Gastrocnemius medialis (tissue), 4 donors: ENCODE measurements at regions of chr12 and their contacts with region 1.

Region 1: GRCh38 chr12:111405149-111405860 is 418 bp upstream of the SH2B3 start:
- DNase-seq: peak; percentile 83 to 90
- ATAC-seq: peak; percentile 80 to 86
- H3K4me3 ChIP-seq: peak overlapping the region; percentile 64 to 78 (median 68)
- H3K27ac ChIP-seq: peak overlapping the region; percentile 54 to 83 (median 83)
- H3K4me1 ChIP-seq: peaks cover 43 to 51% of the 10 kb centered on the region in 2 donors
- H3K27me3 ChIP-seq: no peaks in the 10 kb centered on the region
- CTCF ChIP-seq: peak; percentile 27 to 70 (median 62)
- POLR2A ChIP-seq: no peak

Region 2: DNA sequence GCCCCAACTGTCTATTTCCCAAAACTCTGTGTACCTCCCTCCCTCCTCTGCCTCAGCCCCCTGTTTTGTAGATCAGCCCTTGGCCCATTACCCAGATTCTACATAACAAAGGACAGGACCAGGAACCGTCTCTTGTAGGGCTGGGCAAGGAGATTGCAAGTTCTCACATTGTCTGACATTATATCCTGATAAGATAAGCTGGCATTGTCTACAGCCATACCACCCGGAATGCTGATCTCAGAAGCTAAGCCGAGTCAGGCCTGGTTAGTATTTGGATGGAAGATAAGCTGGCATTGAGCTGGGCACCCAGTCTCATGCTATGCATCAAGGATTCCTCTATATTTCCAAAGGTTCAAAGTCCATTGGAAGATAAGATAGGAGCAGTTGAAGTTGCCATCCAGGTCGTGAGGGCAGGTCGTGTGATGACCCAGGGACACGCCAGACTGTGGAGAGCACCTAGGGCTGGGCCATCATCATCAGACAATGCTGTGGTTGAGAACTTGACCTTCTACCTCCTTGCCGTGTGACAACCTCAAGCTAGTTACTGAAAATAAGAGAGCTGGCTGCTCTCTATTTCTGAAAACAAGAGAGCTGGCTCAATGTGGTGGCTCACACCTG is 65.9 kb before region 1 on chr12:
- in situ Hi-C with region 1: no loop called
- intact Hi-C with region 1: no loop called
- DNase-seq: no peak
- ATAC-seq: no peak
- H3K4me3 ChIP-seq: no peak overlapping the region
- H3K27ac ChIP-seq: no peak overlapping the region
- H3K4me1 ChIP-seq: no peaks in the 10 kb centered on the region
- H3K27me3 ChIP-seq: no peaks in the 10 kb centered on the region
- CTCF ChIP-seq: no peak
- POLR2A ChIP-seq: no peak

Region 3: DNA sequence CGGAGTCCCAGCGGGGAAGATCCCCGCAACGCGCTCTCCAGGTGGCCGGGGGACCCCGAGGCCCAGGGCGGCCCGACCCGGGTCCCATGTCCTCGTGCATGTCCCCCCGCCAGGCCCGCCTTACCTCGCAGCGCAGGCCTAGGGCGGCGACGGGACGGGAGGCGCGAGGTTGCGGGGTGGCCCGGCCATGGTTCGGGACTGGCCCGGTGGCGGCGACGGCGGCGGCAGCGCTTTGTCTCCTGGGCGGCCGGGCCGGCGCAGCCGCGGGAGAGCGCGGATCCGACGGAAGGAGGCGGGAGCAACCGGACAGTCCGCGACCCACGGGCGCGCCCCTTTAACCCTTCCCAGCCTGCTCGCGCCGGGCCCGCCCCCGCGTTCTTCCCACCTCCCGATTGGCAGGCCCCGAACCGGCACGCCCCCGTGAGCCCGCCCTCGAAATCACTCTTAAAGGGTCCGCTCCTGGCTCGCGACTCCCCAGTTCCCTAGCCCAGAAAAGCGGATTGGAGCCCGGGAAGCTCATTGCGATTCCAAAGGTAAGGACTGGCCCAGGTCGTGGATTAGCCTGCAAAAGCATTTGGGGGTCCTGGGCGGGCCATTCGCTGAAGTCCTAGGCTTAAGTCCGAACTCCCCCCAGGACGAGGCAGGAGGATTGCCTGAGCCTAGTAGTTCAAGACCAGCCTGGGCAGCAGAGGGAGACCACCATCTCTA is 36.4 kb before region 1 on chr12 and contains the start of gene PHETA1:
- in situ Hi-C with region 1: no loop called
- intact Hi-C with region 1: loop called (anchors 2 kb)
- DNase-seq: peak; percentile 91 to 92
- ATAC-seq: peak; percentile 90 to 95
- H3K4me3 ChIP-seq: peak within 1 kb of the TSS; percentile 80 to 98 (median 90)
- H3K27ac ChIP-seq: peak within 1 kb of the TSS; percentile 66 to 89 (median 79)
- H3K4me1 ChIP-seq: peaks cover 12 to 19% of the 10 kb centered on the region in 2 donors
- H3K27me3 ChIP-seq: no peaks in the 10 kb centered on the region
- CTCF ChIP-seq: no peak
- POLR2A ChIP-seq: peak; percentile 63 to 74
- total RNA-seq, gene PHETA1: 8.7 to 16.7 (median 14.5) TPM

Region 4: DNA sequence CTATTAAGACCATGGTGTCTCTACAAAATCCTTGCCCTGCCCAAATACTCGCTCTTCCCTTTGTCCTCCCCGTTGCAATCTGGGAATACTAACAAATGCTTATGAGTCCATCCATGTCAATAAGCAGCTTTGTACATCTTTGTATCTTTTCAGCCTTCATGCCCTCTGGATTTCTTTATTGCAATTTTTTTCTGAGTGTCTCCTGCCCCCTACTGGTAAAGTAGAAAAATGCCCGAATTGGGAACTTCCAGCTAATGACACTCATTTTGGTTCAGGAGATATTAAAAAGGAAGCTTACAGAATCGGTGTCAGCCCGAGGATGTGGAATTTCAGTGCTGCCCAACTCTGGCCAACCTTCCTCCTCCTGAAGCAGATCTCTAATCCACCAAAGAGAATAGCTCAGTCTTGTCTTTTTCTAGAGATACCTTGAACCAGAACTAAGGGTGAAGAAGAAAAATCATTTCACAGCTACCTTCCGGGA is 46.4 kb after region 1 on chr12:
- in situ Hi-C with region 1: no loop called
- intact Hi-C with region 1: loop called (anchors 2 kb)
- DNase-seq: no peak
- ATAC-seq: no peak
- H3K4me3 ChIP-seq: no peak overlapping the region
- H3K27ac ChIP-seq: peak overlapping the region; percentile 73 to 87 (median 82)
- H3K4me1 ChIP-seq: peaks cover 35 to 43% of the 10 kb centered on the region in 2 donors
- H3K27me3 ChIP-seq: no peaks in the 10 kb centered on the region
- CTCF ChIP-seq: peak; percentile 67 to 85 (median 84)
- POLR2A ChIP-seq: no peak

Region 5: GRCh38 chr12:111685744-111686517 is 280.6 kb after region 1 on chr12 and contains the starts of genes ACAD10 and BRAP:
- in situ Hi-C with region 1: no loop called
- intact Hi-C with region 1: loop called (anchors 5 kb)
- DNase-seq: peak; percentile 85 to 94
- ATAC-seq: peak; percentile 96 to 98
- H3K4me3 ChIP-seq: peak within 1 kb of the TSS; percentile 75 to 91 (median 82)
- H3K27ac ChIP-seq: peak within 1 kb of the TSS; percentile 82 to 95 (median 88)
- H3K4me1 ChIP-seq: peaks cover 26% of the 10 kb centered on the region in 2 donors
- H3K27me3 ChIP-seq: no peaks in the 10 kb centered on the region
- CTCF ChIP-seq: no peak
- POLR2A ChIP-seq: peak; percentile 74 to 87
- total RNA-seq, gene ACAD10: 8.3 to 12.6 (median 11.7) TPM
- total RNA-seq, gene BRAP: 25.2 to 38.5 (median 29.2) TPM

Region 6: GRCh38 chr12:111766608-111767361 is 361.5 kb after region 1 on chr12 and contains the start of gene ALDH2:
- in situ Hi-C with region 1: no loop called
- intact Hi-C with region 1: loop called (anchors 2 kb)
- DNase-seq: peak; percentile 45 to 55
- ATAC-seq: peak; percentile 82 to 84
- H3K4me3 ChIP-seq: peak within 1 kb of the TSS; percentile 85 to 95 (median 92)
- H3K27ac ChIP-seq: peak within 1 kb of the TSS; percentile 81 to 87 (median 84)
- H3K4me1 ChIP-seq: peaks cover 6 to 24% of the 10 kb centered on the region in 2 donors
- H3K27me3 ChIP-seq: no peaks in the 10 kb centered on the region
- CTCF ChIP-seq: no peak
- POLR2A ChIP-seq: peak; percentile 69 to 85
- total RNA-seq, gene ALDH2: 70.9 to 156 (median 89.9) TPM